ENCODE measurements at regions of chr17 and their contacts with region 1.

Region 1: GRCh38 chr17:38509008-38509771 is 80.9 kb downstream of the ARHGAP23 start:
- DNase-seq: peak; percentile 83
- H3K4me3 ChIP-seq: no peak overlapping the region
- H3K27ac ChIP-seq: peak overlapping the region; percentile 31
- H3K27me3 ChIP-seq: no peaks in the 10 kb centered on the region
- CTCF ChIP-seq: peak; percentile 87

Region 2: GRCh38 chr17:38498186-38498752 is 10.9 kb before region 1 on chr17:
- CTCF ChIA-PET with region 1: interaction called, 12 read pairs
- POLR2A ChIA-PET with region 1: no interaction called
- DNase-seq: no peak
- H3K4me3 ChIP-seq: no peak overlapping the region
- H3K27ac ChIP-seq: no peak overlapping the region
- H3K27me3 ChIP-seq: no peaks in the 10 kb centered on the region
- CTCF ChIP-seq: no peak

Region 3: GRCh38 chr17:38667099-38667786 is 158.1 kb after region 1 on chr17:
- CTCF ChIA-PET with region 1: interaction called, 14 read pairs
- POLR2A ChIA-PET with region 1: no interaction called
- DNase-seq: peak; percentile 42
- H3K4me3 ChIP-seq: no peak overlapping the region
- H3K27ac ChIP-seq: no peak overlapping the region
- H3K27me3 ChIP-seq: peaks cover 50% of the 10 kb centered on the region
- CTCF ChIP-seq: peak; percentile 100